ENCODE measurements at regions of chr7 and their contacts with region 1.

Region 1: DNA sequence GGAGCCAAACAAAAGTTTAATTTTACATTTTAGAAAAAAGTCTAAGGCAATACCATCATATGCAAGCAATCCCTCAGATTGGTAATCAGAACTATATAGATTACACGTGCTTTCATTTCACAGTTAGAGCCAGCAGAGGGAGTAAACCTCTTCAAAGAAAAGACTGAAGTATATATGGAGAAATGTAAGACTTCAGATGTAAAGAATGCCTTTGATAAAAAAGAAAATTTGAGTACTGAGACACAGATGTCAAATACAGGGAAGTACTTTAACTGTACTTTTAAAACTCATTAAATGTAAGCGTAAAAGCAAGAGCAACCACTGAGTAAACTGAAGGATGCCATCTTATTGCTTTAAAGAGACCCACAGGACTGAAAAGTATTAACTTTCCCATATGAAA is 101.4 kb upstream of the FAM133B start:
- DNase-seq: peak; percentile 76
- ATAC-seq: peak; percentile 30; the same call in 1 of the 2 replicates
- H3K4me3 ChIP-seq: no peak overlapping the region
- H3K27ac ChIP-seq: peak overlapping the region; percentile 36
- H3K4me1 ChIP-seq: peaks cover 2% of the 10 kb centered on the region; the same call in 1 of the 2 replicates
- H3K27me3 ChIP-seq: no peaks in the 10 kb centered on the region
- CTCF ChIP-seq: peak; percentile 61
- POLR2A ChIP-seq: no peak
- RAD21 ChIP-seq: peak; percentile 65

Region 2: GRCh38 chr7:92633211-92633906 is 58.2 kb before region 1 on chr7:
- CTCF ChIA-PET with region 1: no interaction called
- POLR2A ChIA-PET with region 1: no interaction called
- dilution Hi-C with region 1: no loop called
- in situ Hi-C with region 1: no loop called
- intact Hi-C with region 1: no loop called
- DNase-seq: peak; percentile 94
- ATAC-seq: peak; percentile 66
- H3K4me3 ChIP-seq: no peak overlapping the region
- H3K27ac ChIP-seq: no peak overlapping the region
- H3K4me1 ChIP-seq: peaks cover 6% of the 10 kb centered on the region
- H3K27me3 ChIP-seq: no peaks in the 10 kb centered on the region
- CTCF ChIP-seq: no peak
- POLR2A ChIP-seq: no peak
- RAD21 ChIP-seq: no peak

Region 3: GRCh38 chr7:92731335-92732063 is 39.9 kb after region 1 on chr7:
- CTCF ChIA-PET with region 1: no interaction called
- POLR2A ChIA-PET with region 1: no interaction called
- dilution Hi-C with region 1: no loop called
- in situ Hi-C with region 1: no loop called
- intact Hi-C with region 1: no loop called
- DNase-seq: peak; percentile 45
- ATAC-seq: no peak
- H3K4me3 ChIP-seq: no peak overlapping the region
- H3K27ac ChIP-seq: no peak overlapping the region
- H3K4me1 ChIP-seq: peaks cover 15% of the 10 kb centered on the region
- H3K27me3 ChIP-seq: no peaks in the 10 kb centered on the region
- CTCF ChIP-seq: no peak
- POLR2A ChIP-seq: no peak
- RAD21 ChIP-seq: no peak

Region 4: GRCh38 chr7:92751902-92752901 is 60.6 kb after region 1 on chr7:
- CTCF ChIA-PET with region 1: no interaction called
- POLR2A ChIA-PET with region 1: interaction called, 3 read pairs
- dilution Hi-C with region 1: no loop called
- in situ Hi-C with region 1: no loop called
- intact Hi-C with region 1: loop called (anchors 2 kb)
- DNase-seq: peak; percentile 98
- ATAC-seq: peak; percentile 82
- H3K4me3 ChIP-seq: no peak overlapping the region
- H3K27ac ChIP-seq: peak overlapping the region; percentile 43; the same call in 1 of the 2 replicates
- H3K4me1 ChIP-seq: peaks cover 25% of the 10 kb centered on the region
- H3K27me3 ChIP-seq: no peaks in the 10 kb centered on the region
- CTCF ChIP-seq: no peak
- POLR2A ChIP-seq: no peak
- RAD21 ChIP-seq: no peak

Region 5: DNA sequence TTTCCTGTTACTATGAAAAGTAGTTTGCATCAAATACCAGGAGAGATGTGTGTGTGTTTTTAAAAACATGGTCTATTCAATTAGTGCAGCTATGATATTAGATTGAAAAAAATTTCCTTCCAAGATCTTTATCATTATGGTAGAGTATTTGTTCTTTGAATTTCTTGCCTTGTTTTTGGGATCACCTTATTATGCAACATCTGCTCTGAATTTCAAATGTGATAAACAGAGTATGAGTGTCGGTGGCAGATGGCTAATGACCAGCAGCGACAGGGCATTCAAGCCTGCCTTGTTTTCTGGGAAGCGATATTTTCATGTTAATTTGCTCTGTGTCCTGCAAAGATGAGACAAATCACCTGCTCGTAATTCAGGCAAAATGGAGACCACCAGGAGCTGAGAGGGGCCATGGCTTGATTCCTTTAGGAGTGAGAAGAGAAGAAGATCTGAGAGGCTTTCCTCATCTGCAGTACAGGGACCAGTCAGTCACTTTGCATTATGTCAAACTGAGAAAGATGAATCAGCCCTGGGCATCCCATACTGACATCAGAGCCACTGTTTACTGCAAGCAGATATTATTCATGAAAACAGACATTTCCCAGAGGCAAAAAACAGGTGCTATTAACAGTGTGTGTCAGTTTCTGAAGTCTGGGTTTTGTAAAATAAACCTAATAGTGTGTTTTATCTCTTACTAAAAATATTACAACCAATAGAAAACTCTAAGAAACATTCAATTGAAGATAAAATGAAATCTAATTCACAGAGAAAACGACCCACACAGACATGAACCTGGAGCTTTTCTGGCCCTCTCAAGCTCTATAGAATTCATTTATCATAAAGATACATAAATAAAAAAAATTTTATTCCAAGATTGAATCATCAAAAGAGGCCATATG is 77.2 kb after region 1 on chr7:
- CTCF ChIA-PET with region 1: no interaction called
- POLR2A ChIA-PET with region 1: interaction called, 3 read pairs
- dilution Hi-C with region 1: no loop called
- in situ Hi-C with region 1: no loop called
- intact Hi-C with region 1: loop called (anchors 5 kb)
- DNase-seq: peak; percentile 64
- ATAC-seq: no peak
- H3K4me3 ChIP-seq: no peak overlapping the region
- H3K27ac ChIP-seq: no peak overlapping the region; the same call in 1 of the 2 replicates
- H3K4me1 ChIP-seq: peaks cover 26% of the 10 kb centered on the region
- H3K27me3 ChIP-seq: no peaks in the 10 kb centered on the region
- CTCF ChIP-seq: no peak
- POLR2A ChIP-seq: no peak
- RAD21 ChIP-seq: no peak

Region 6: GRCh38 chr7:92778972-92779371 is 87.4 kb after region 1 on chr7:
- CTCF ChIA-PET with region 1: no interaction called
- POLR2A ChIA-PET with region 1: no interaction called
- dilution Hi-C with region 1: no loop called
- in situ Hi-C with region 1: no loop called
- intact Hi-C with region 1: no loop called
- DNase-seq: peak; percentile 85
- ATAC-seq: no peak
- H3K4me3 ChIP-seq: no peak overlapping the region
- H3K27ac ChIP-seq: no peak overlapping the region
- H3K4me1 ChIP-seq: peaks cover 15% of the 10 kb centered on the region
- H3K27me3 ChIP-seq: no peaks in the 10 kb centered on the region
- CTCF ChIP-seq: 0 out of 2 replicates have a peak, but pooled peaks have one; percentile 3
- POLR2A ChIP-seq: no peak
- RAD21 ChIP-seq: no peak

Region 7: DNA sequence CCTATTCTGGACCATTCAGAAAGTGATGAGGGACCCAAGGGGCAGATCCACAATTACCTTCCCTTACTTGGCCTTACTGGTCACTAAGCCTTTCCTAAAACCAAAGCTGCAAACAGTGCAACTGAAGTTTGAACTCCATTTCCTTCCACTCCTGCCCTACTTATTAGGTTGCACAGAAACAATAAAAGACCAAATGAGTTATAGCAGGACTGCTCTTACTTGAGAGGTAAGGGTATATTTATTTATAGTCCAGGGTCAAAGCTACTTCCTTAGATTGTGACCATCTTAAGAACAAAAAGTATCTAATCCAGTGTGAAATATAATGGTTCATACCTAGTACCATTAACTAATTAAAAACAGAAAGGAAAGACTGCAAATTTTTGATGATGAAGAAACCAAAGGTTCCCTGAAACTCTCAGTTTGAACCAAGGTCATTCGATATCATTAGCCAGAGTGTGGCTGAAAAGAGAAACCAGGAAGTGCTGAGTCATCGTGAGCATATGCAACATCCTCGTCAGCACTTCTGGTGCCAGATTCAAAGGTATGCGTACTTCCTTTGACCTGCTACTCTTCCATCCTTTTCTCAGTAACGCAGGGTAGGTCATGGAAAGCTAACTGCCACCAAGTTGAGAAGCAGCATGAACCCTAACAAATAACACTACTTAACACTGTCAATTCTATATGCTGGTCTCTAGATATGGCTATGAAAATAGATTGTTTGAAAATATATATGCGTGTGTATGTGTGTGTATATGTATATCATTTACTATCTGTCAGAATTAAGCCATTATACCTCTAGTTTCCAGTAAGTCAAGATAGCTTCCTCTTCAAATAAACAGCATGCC is 118.0 kb after region 1 on chr7:
- CTCF ChIA-PET with region 1: no interaction called
- POLR2A ChIA-PET with region 1: no interaction called
- dilution Hi-C with region 1: no loop called
- in situ Hi-C with region 1: no loop called
- intact Hi-C with region 1: loop called (anchors 5 kb)
- DNase-seq: peak; percentile 97
- ATAC-seq: peak; percentile 77
- H3K4me3 ChIP-seq: no peak overlapping the region
- H3K27ac ChIP-seq: peak overlapping the region; percentile 68
- H3K4me1 ChIP-seq: peaks cover 7% of the 10 kb centered on the region
- H3K27me3 ChIP-seq: no peaks in the 10 kb centered on the region
- CTCF ChIP-seq: no peak
- POLR2A ChIP-seq: no peak
- RAD21 ChIP-seq: no peak

Region 8: GRCh38 chr7:92988051-92988450 is 296.5 kb after region 1 on chr7:
- CTCF ChIA-PET with region 1: no interaction called
- POLR2A ChIA-PET with region 1: no interaction called
- dilution Hi-C with region 1: no loop called
- in situ Hi-C with region 1: no loop called
- intact Hi-C with region 1: loop called (anchors 5 kb)
- DNase-seq: peak; percentile 78
- ATAC-seq: peak; percentile 64
- H3K4me3 ChIP-seq: no peak overlapping the region
- H3K27ac ChIP-seq: no peak overlapping the region
- H3K4me1 ChIP-seq: peaks cover 7% of the 10 kb centered on the region
- H3K27me3 ChIP-seq: no peaks in the 10 kb centered on the region
- CTCF ChIP-seq: peak; percentile 52
- POLR2A ChIP-seq: no peak
- RAD21 ChIP-seq: peak; percentile 58

Region 9: GRCh38 chr7:93015779-93016481 is 324.4 kb after region 1 on chr7:
- CTCF ChIA-PET with region 1: interaction called, 4 read pairs
- POLR2A ChIA-PET with region 1: no interaction called
- dilution Hi-C with region 1: no loop called
- in situ Hi-C with region 1: no loop called
- intact Hi-C with region 1: loop called (anchors 10 kb)
- DNase-seq: peak; percentile 45
- ATAC-seq: 0 out of 2 replicates have a peak, but pooled peaks have one; percentile 3
- H3K4me3 ChIP-seq: no peak overlapping the region
- H3K27ac ChIP-seq: peak overlapping the region; percentile 93
- H3K4me1 ChIP-seq: peaks cover 39% of the 10 kb centered on the region
- H3K27me3 ChIP-seq: no peaks in the 10 kb centered on the region
- CTCF ChIP-seq: no peak
- POLR2A ChIP-seq: no peak
- RAD21 ChIP-seq: no peak